ENCODE measurements at regions of chr13 and their contacts with region 1.

Region 1: GRCh38 chr13:37869756-37870488 is at the start of gene TRPC4:
- DNase-seq: peak; percentile 6 to 54 (median 21)
- ATAC-seq: peak; percentile 93
- H3K4me3 ChIP-seq: peak within 1 kb of the TSS; percentile 26
- H3K27ac ChIP-seq: no peak within 1 kb of the TSS
- H3K4me1 ChIP-seq: peaks cover 0 to 11% of the 10 kb centered on the region in 2 experiments; a peak in 2 of 5 replicates
- H3K27me3 ChIP-seq: no peaks in the 10 kb centered on the region; a peak in 1 of 5 replicates
- CTCF ChIP-seq: peak; percentile 59 to 65 (median 61)
- EP300 ChIP-seq: no peak
- POLR2A ChIP-seq: no peak
- RAD21 ChIP-seq: peak; percentile 39 to 71
- polyA plus RNA-seq, gene TRPC4: not detected

Region 2: GRCh38 chr13:37944869-37945442 is 75.0 kb after region 1 on chr13:
- CTCF ChIA-PET with region 1: no interaction called
- POLR2A ChIA-PET with region 1: no interaction called
- in situ Hi-C with region 1: no loop called
- intact Hi-C with region 1: loop called (anchors 1 kb)
- DNase-seq: peak in 1 of 4 experiments; percentile 22
- ATAC-seq: peak; percentile 82
- H3K4me3 ChIP-seq: no peak overlapping the region
- H3K27ac ChIP-seq: no peak overlapping the region
- H3K4me1 ChIP-seq: no peaks in the 10 kb centered on the region; a peak in 2 of 5 replicates
- H3K27me3 ChIP-seq: no peaks in the 10 kb centered on the region
- CTCF ChIP-seq: no peak
- EP300 ChIP-seq: no peak
- POLR2A ChIP-seq: no peak
- RAD21 ChIP-seq: no peak

Region 3: DNA sequence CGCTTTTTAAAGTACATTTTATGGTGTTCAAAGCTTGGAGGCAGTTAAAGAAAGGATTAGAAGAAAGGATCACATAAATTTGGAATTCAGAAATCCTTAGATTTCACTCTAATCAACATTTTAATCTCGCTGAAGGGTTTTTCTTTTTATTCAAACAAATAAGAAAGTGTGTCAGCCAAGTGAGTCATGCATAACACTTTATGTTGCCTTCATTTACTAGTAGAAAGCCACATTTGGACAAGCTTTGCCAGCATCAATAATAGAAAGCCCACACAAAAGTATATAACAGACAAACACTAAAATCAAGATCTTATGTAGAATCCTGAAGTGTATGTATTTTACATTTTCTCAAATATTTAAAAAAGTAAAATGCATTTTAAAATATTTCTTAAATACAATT is 154.5 kb after region 1 on chr13:
- CTCF ChIA-PET with region 1: no interaction called
- POLR2A ChIA-PET with region 1: no interaction called
- in situ Hi-C with region 1: loop called (anchors 25 kb)
- intact Hi-C with region 1: loop called (anchors 5 kb)
- DNase-seq: no peak
- ATAC-seq: no peak
- H3K4me3 ChIP-seq: no peak overlapping the region
- H3K27ac ChIP-seq: no peak overlapping the region
- H3K4me1 ChIP-seq: no peaks in the 10 kb centered on the region
- H3K27me3 ChIP-seq: no peaks in the 10 kb centered on the region
- CTCF ChIP-seq: no peak
- EP300 ChIP-seq: no peak
- POLR2A ChIP-seq: no peak
- RAD21 ChIP-seq: no peak

Region 4: GRCh38 chr13:38582133-38582532 is 712.2 kb after region 1 on chr13:
- CTCF ChIA-PET with region 1: no interaction called
- POLR2A ChIA-PET with region 1: no interaction called
- in situ Hi-C with region 1: no loop called
- intact Hi-C with region 1: loop called (anchors 5 kb)
- DNase-seq: peak; percentile 6 to 50 (median 11)
- ATAC-seq: peak; percentile 78
- H3K4me3 ChIP-seq: no peak overlapping the region
- H3K27ac ChIP-seq: no peak overlapping the region
- H3K4me1 ChIP-seq: no peaks in the 10 kb centered on the region
- H3K27me3 ChIP-seq: no peaks in the 10 kb centered on the region
- CTCF ChIP-seq: peak; percentile 30 to 50 (median 32); a peak in 3 of 6 replicates
- EP300 ChIP-seq: no peak
- POLR2A ChIP-seq: no peak
- RAD21 ChIP-seq: peak; percentile 40 to 53

Measured in K562 (cell line).